ENCODE measurements at regions of chr6 and their contacts with region 1.

Region 1: GRCh38 chr6:15691250-15691869 is 28.5 kb upstream of the DTNBP1 start:
- ATAC-seq: peak; percentile 100
- H3K4me3 ChIP-seq: no peak overlapping the region
- H3K27ac ChIP-seq: no peak overlapping the region
- H3K4me1 ChIP-seq: no peaks in the 10 kb centered on the region

Region 2: DNA sequence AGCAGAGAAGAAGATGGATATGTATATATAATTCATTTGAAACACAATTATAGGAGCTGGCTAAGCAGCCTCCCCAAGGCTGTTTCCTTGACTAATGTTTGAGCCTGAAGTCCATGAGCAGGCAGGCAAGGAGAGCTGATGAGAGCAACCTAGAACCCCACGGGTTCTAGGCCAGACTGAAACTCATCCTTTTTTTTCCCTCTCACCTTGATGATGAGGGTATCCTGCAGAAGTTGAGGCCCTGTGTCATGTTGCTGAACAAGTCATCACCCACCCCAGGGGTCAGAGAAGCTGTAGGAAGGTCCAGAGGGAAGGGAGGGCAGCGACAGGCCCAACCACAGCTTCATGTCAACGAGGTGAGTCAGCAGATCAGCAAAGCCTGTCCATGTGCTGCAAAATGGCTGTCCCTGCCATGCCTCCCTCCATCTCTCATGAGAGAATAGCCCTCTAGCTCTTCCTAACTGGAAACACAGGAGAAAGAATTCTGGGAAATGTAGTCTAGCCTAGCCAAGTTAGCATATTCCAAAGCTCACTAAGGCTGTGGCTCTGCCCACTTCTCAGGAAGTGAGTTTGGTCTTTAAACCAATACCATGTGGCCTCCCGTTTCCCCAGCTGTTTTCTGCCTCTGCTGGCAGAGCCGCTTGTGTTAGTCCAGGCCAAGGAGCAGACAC is 62.8 kb after region 1 on chr6:
- in situ Hi-C with region 1: loop called in 1 of 9 experiments (anchors 10 kb)
- ATAC-seq: peak in 5 of 8 experiments; percentile 45 to 90 (median 74)
- H3K4me3 ChIP-seq: no peak overlapping the region
- H3K27ac ChIP-seq: no peak overlapping the region
- H3K4me1 ChIP-seq: no peaks in the 10 kb centered on the region

Region 3: GRCh38 chr6:15781890-15782289 is 90.5 kb after region 1 on chr6:
- in situ Hi-C with region 1: no loop called
- ATAC-seq: no peak
- H3K4me3 ChIP-seq: no peak overlapping the region
- H3K27ac ChIP-seq: no peak overlapping the region
- H3K4me1 ChIP-seq: peaks cover 0 to 8% of the 10 kb centered on the region in 2 donors

Region 4: GRCh38 chr6:16168858-16169257 is 477.5 kb after region 1 on chr6:
- in situ Hi-C with region 1: loop called in 1 of 9 experiments (anchors 25 kb)
- ATAC-seq: peak in 4 of 8 experiments; percentile 22 to 76 (median 61)
- H3K4me3 ChIP-seq: no peak overlapping the region
- H3K27ac ChIP-seq: no peak overlapping the region
- H3K4me1 ChIP-seq: no peaks in the 10 kb centered on the region

Region 5: DNA sequence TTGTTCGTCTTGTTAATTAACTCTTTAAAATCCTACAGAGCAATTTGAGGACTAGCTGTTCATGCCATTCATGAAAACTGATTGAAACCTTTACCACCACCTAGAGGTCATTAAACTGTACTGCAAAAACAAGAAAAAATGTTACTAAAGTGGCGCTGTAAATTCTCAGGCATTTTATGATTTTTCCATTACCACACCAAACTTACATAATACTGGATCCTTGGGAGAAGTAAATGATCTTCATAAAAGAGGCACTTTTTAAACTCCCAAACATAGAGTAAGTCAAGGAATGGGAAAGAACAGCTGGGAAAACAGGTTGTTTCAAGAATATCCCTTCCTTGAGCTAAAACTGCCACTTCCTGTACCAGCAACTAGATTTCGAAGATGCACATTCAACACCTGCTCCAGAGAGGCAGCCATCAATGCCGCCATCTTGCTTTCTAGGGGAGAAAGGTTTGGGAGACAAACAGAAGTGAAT is 491.9 kb after region 1 on chr6:
- in situ Hi-C with region 1: loop called in 6 of 9 experiments (anchors 25 kb)
- ATAC-seq: peak in 3 of 8 experiments; percentile 46 to 70 (median 47)
- H3K4me3 ChIP-seq: no peak overlapping the region
- H3K27ac ChIP-seq: no peak overlapping the region
- H3K4me1 ChIP-seq: no peaks in the 10 kb centered on the region

Region 6: DNA sequence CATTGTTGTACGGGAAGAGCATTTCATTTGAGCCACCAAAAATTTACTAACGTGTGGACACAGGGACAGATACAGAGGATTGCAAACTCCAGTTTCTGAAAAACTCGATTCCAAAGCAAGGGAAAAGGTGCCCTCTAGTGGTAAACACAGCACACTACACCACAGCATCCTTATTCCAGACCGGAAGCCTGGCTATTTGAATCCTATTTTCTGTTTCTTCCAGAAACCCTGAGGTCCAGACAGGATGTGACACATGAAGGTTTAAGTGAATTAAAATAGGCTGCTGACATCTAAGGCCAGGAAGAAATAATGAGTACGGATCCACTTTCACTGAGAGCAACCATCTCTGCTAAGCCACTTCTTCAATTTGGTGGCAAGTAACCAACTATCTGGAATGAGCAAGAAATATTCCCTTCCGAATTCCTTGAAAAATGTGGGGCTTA is 515.3 kb after region 1 on chr6:
- in situ Hi-C with region 1: loop called in 2 of 9 experiments (anchors 10 to 25 kb)
- ATAC-seq: peak; percentile 35 to 78 (median 60)
- H3K4me3 ChIP-seq: no peak overlapping the region
- H3K27ac ChIP-seq: no peak overlapping the region
- H3K4me1 ChIP-seq: peaks cover 13 to 16% of the 10 kb centered on the region in 2 donors

Measured in motor neuron (in vitro differentiated cells).